Left cardiac atrium (tissue), 4 donors: ENCODE measurements at regions of chr12 and their contacts with region 1.

Region 1: GRCh38 chr12:55738123-55739024 is 4.5 kb upstream of the GDF11 start:
- DNase-seq: peak; percentile 90
- ATAC-seq: peak; percentile 84

Region 2: GRCh38 chr12:55797068-55797467 is 58.7 kb after region 1 on chr12:
- intact Hi-C with region 1: loop called (anchors 5 to 10 kb)
- DNase-seq: no peak
- ATAC-seq: peak; percentile 27 to 47

Region 3: DNA sequence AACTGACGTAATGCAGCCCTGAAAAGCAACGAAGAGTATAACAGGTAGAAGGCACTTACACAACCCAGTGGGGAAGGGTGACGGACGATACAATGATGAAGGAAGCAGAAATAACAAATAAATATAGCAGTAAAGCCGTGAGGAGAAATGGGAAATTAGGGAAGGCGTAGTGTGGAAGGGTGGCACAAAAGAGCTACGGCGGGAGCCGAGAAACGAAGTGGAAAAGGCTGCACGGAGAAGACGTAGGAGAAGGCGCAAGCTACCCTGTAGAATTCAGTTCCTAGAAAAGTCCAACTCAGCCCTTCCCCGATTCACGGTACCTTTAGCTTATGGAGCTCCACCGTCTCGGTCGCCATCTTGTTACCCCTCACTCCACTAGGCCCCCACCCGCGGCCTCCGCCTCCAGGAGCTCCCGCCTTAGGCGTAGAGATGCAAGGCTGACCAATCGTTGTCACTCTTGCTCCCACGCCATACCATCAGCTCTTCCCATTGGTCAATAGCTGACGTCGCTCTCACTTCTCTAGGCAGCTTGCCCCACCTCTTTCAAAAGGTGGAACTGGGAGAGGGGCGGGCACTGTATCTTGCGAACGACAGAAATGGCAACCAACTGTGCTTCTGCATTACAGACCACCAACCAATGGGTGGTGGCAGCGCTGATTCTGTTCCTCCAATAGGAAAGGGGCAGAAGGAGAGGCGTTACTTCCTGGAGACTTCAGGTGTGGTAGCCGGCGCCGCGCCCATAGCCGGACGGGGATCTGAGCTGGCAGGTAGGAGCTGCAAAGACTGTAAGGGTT is 79.2 kb after region 1 on chr12 and contains the starts of genes ORMDL2 and SARNP:
- intact Hi-C with region 1: loop called in 1 of 2 experiments (anchors 5 kb)
- DNase-seq: peak; percentile 97
- ATAC-seq: peak; percentile 98 to 99
- total RNA-seq, gene ORMDL2: 21.4 to 24.0 TPM
- total RNA-seq, gene SARNP: 42.9 to 50.1 TPM

Region 4: GRCh38 chr12:55926738-55927587 is 188.6 kb after region 1 on chr12:
- intact Hi-C with region 1: loop called in 1 of 2 experiments (anchors 10 kb)
- DNase-seq: peak; percentile 89
- ATAC-seq: peak; percentile 87 to 89

Region 5: GRCh38 chr12:55935738-55936151 is 197.4 kb after region 1 on chr12:
- intact Hi-C with region 1: loop called (anchors 5 to 10 kb)
- DNase-seq: peak; percentile 67
- ATAC-seq: peak; percentile 2 to 35

Region 6: DNA sequence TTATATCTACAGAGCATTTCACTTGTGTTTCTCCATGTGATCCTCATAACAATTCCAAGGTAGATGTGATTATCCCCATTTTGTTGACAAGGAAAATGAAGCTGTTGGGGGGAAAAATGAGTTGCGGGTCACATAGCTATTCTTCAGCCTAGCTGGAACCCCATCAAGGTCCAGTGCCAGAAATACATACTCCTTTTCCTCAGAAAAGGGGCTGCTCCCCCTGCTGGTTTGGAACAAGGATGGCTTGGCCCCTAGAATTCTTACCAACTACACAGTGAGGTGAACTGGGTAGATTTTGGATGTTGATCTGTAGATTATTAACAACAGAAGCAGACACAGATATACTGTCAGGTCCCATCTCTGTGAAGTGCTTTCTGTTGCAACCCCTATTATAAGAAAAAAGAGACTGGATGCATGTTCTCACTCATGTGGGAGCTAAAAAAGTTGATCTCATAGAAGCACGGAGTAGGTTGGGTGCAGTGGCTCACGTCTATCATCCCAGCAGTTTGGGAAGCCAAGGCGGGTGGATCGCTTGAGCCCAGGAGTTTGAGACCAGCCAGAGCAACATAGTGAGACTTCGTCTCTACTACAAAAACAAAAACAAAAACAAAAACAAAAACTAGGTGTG is 291.4 kb after region 1 on chr12:
- intact Hi-C with region 1: loop called in 1 of 2 experiments (anchors 5 kb)
- DNase-seq: peak; percentile 34
- ATAC-seq: peak; percentile 69 to 73